A673 (cell line): ENCODE measurements at regions of chr15 and their contacts with region 1.

Region 1: GRCh38 chr15:63860155-63860554 is 26.4 kb upstream of the HERC1 start:
- DNase-seq: no peak
- H3K4me3 ChIP-seq: no peak overlapping the region
- H3K27ac ChIP-seq: no peak overlapping the region
- H3K4me1 ChIP-seq: no peaks in the 10 kb centered on the region
- H3K27me3 ChIP-seq: no peaks in the 10 kb centered on the region
- CTCF ChIP-seq: no peak

Region 2: GRCh38 chr15:62637950-62638619 is 1222.1 kb before region 1 on chr15:
- CTCF ChIA-PET with region 1: no interaction called
- POLR2A ChIA-PET with region 1: interaction called, 16 read pairs
- intact Hi-C with region 1: no loop called
- DNase-seq: no peak
- H3K4me3 ChIP-seq: no peak overlapping the region
- H3K27ac ChIP-seq: no peak overlapping the region
- H3K4me1 ChIP-seq: no peaks in the 10 kb centered on the region
- H3K27me3 ChIP-seq: no peaks in the 10 kb centered on the region
- CTCF ChIP-seq: no peak

Region 3: DNA sequence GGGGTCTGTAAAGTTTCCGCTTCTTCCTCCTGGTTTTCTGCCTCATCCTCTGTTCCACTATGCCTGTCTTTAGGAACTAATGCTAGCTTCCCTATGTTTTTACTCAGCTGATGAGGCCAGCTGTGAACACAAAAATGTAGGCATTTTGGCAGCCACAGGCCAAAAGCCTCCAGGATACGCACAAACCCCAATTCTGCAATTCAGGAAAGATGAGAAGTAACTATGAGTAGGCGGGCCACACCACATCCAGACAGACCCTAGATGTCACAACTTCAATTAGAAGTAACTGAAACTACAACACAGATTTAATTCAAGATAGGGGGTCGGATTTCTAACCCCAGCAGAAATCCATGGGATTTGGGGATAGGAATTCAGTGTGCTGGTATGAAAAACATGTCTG is 490.4 kb before region 1 on chr15:
- CTCF ChIA-PET with region 1: no interaction called
- POLR2A ChIA-PET with region 1: interaction called, 10 read pairs
- intact Hi-C with region 1: no loop called
- DNase-seq: no peak
- H3K4me3 ChIP-seq: no peak overlapping the region
- H3K27ac ChIP-seq: no peak overlapping the region
- H3K4me1 ChIP-seq: peaks cover 15% of the 10 kb centered on the region
- H3K27me3 ChIP-seq: no peaks in the 10 kb centered on the region
- CTCF ChIP-seq: no peak

Region 4: GRCh38 chr15:64582202-64582601 is 722.0 kb after region 1 on chr15:
- CTCF ChIA-PET with region 1: no interaction called
- POLR2A ChIA-PET with region 1: no interaction called
- intact Hi-C with region 1: no loop called
- DNase-seq: no peak
- H3K4me3 ChIP-seq: no peak overlapping the region
- H3K27ac ChIP-seq: no peak overlapping the region
- H3K4me1 ChIP-seq: peaks cover 11% of the 10 kb centered on the region
- H3K27me3 ChIP-seq: no peaks in the 10 kb centered on the region
- CTCF ChIP-seq: no peak